ENCODE measurements at regions of chr3 and their contacts with region 1.

Region 1: DNA sequence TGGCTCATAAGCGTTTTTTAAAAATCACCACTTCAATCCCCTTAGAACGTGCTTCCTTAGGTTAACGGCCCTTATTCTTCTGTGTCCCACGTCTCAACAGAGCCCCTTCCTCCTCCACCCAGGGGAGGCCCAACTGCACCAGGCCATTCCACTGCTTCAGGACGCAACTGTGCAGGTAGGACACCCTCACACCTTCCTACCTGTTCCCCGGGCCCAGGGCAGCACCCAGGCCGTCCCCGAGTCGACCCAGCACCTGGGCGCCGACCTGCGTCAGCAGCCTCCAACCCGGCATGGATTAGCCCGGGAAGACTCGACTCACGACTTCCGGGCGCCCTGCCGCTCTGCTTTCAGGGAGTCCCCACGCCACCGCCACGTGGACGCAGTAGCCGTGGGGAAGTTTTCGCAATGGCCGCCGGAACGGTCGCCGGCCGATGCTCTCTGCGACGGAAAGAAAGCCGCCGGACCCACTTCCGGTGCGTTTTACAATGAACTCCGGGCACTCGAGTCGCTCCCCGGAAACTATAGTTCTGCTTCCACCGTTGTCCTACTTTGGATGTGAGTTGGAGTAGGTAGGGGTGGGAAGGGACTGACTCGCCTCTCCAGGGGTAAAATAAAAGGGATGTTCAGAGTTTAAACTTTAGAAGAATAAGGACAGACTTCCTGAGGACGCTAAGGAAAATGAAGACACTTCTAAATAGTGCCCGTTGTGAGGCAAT is at the start of gene MRPL3:
- DNase-seq: peak; percentile 73
- ATAC-seq: peak; percentile 92
- H3K4me3 Mint-ChIP-seq: peak within 1 kb of the TSS; percentile 98
- H3K27ac Mint-ChIP-seq: peak within 1 kb of the TSS; percentile 93
- H3K4me1 Mint-ChIP-seq: peaks cover 38% of the 10 kb centered on the region
- H3K27me3 Mint-ChIP-seq: peaks cover 3% of the 10 kb centered on the region
- CTCF ChIP-seq: no peak
- total RNA-seq, gene MRPL3: 79.9 and 81.7 TPM in 2 replicates

Region 2: DNA sequence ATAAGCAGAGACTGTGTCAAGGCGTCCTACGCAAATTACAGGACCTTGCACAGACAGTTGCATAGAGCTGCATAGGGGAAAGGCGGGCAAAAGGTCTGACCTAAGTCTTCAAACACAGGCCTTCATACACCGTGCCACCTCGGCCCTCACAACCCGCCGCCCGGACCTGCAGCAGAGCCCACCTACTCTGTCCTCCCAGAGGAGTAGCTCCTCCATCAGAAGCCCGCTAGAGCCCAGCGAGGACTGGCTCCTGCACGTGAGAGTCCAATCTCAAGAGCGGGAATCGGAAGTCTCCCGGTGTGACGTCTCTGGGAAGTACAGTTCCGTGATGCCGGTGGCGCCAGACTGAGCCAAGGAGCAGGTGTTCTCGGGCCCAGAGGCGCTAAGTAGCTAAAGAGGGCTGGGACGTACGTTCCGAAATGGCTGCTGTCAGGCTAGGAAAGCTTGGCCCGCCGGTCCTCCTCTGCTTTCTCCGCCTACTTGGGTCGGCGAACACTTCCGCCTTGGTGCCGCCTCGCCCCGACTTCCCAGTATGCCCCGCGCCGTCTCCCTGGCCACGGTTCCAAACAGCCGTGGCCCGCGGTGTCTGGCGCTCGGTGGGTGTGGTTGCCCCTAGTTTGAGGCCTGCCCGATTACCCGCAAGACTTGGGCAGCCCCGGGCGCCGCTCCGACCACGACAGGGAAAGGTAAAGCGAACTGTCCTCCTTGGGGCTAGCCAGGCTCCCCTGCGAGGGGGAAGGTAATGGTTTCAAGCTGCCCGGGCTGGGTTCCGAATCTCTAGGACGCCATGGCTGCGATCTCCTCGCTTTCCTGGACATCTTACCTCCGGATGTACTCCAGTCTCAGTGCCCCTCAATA is 476.1 kb before region 1 on chr3 and contains the starts of genes ASTE1 and NEK11:
- CTCF ChIA-PET with region 1: no interaction called
- POLR2A ChIA-PET with region 1: no interaction called
- intact Hi-C with region 1: loop called (anchors 2 kb)
- DNase-seq: peak; percentile 89
- ATAC-seq: peak; percentile 97
- H3K4me3 Mint-ChIP-seq: peak within 1 kb of the TSS; percentile 96
- H3K27ac Mint-ChIP-seq: peak within 1 kb of the TSS; percentile 97
- H3K4me1 Mint-ChIP-seq: peaks cover 52% of the 10 kb centered on the region
- H3K27me3 Mint-ChIP-seq: no peaks in the 10 kb centered on the region
- CTCF ChIP-seq: no peak
- total RNA-seq, gene ASTE1: 15.6 and 16.9 TPM in 2 replicates
- total RNA-seq, gene NEK11: 1.5 and 1.9 TPM in 2 replicates

Region 3: GRCh38 chr3:131381444-131382291 is 121.0 kb before region 1 on chr3 and contains the start of gene NUDT16:
- CTCF ChIA-PET with region 1: no interaction called
- POLR2A ChIA-PET with region 1: interaction called, 5 read pairs
- intact Hi-C with region 1: loop called (anchors 1 kb)
- DNase-seq: peak; percentile 98
- ATAC-seq: peak; percentile 98
- H3K4me3 Mint-ChIP-seq: peak within 1 kb of the TSS; percentile 97
- H3K27ac Mint-ChIP-seq: peak within 1 kb of the TSS; percentile 92
- H3K4me1 Mint-ChIP-seq: peaks cover 24% of the 10 kb centered on the region
- H3K27me3 Mint-ChIP-seq: no peaks in the 10 kb centered on the region
- CTCF ChIP-seq: no peak
- total RNA-seq, gene NUDT16: 15.8 TPM in 2 replicates

Region 4: GRCh38 chr3:131417751-131418150 is 84.9 kb before region 1 on chr3:
- CTCF ChIA-PET with region 1: no interaction called
- POLR2A ChIA-PET with region 1: no interaction called
- intact Hi-C with region 1: no loop called
- DNase-seq: no peak
- ATAC-seq: no peak
- H3K4me3 Mint-ChIP-seq: no peak overlapping the region
- H3K27ac Mint-ChIP-seq: no peak overlapping the region
- H3K4me1 Mint-ChIP-seq: no peaks in the 10 kb centered on the region
- H3K27me3 Mint-ChIP-seq: no peaks in the 10 kb centered on the region
- CTCF ChIP-seq: no peak

Region 5: DNA sequence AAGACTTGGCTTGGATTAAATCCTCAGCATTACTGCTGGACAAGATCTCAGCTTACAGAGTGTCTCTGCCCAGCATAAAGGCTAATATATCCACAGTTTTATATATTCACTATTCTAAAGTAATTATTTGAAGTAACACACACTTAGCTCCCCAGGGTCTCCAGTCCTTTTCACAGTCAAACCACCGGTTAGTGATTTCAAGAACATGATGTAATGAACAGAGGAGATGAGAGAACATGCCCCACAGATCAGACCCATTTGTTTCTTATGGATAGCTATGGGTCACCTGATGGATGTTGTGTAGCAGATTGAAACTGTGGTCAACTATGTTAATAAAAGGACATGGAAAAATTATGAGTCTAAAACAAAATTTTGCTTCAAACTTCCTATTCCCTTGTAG is 44.9 kb after region 1 on chr3:
- CTCF ChIA-PET with region 1: no interaction called
- POLR2A ChIA-PET with region 1: interaction called, 10 read pairs
- intact Hi-C with region 1: no loop called
- DNase-seq: no peak
- ATAC-seq: no peak
- H3K4me3 Mint-ChIP-seq: no peak overlapping the region
- H3K27ac Mint-ChIP-seq: no peak overlapping the region
- H3K4me1 Mint-ChIP-seq: no peaks in the 10 kb centered on the region
- H3K27me3 Mint-ChIP-seq: peaks cover 4% of the 10 kb centered on the region
- CTCF ChIP-seq: no peak